Right ventricle myocardium superior (tissue), 1 donor: ENCODE measurements at regions of chr11 and their contacts with region 1.

Region 1: GRCh38 chr11:34051349-34052035 is at the start of gene CAPRIN1:
- DNase-seq: peak; percentile 93
- ATAC-seq: peak; percentile 95
- total RNA-seq, gene CAPRIN1: 105 TPM

Region 2: GRCh38 chr11:33857933-33858371 is 193.5 kb before region 1 on chr11:
- intact Hi-C with region 1: no loop called
- DNase-seq: peak; percentile 84
- ATAC-seq: peak; percentile 96

Region 3: GRCh38 chr11:34105079-34105956 is 53.8 kb after region 1 on chr11 and contains the start of gene NAT10:
- intact Hi-C with region 1: loop called (anchors 5 kb)
- DNase-seq: peak; percentile 98
- ATAC-seq: peak; percentile 99
- total RNA-seq, gene NAT10: 20.9 TPM